Activated naive CD4-positive, alpha-beta T cell treated with anti-CD3 and anti-CD28 coated beads for 36 hours (primary cell): ENCODE measurements at regions of chr1 and their contacts with region 1.

Region 1: DNA sequence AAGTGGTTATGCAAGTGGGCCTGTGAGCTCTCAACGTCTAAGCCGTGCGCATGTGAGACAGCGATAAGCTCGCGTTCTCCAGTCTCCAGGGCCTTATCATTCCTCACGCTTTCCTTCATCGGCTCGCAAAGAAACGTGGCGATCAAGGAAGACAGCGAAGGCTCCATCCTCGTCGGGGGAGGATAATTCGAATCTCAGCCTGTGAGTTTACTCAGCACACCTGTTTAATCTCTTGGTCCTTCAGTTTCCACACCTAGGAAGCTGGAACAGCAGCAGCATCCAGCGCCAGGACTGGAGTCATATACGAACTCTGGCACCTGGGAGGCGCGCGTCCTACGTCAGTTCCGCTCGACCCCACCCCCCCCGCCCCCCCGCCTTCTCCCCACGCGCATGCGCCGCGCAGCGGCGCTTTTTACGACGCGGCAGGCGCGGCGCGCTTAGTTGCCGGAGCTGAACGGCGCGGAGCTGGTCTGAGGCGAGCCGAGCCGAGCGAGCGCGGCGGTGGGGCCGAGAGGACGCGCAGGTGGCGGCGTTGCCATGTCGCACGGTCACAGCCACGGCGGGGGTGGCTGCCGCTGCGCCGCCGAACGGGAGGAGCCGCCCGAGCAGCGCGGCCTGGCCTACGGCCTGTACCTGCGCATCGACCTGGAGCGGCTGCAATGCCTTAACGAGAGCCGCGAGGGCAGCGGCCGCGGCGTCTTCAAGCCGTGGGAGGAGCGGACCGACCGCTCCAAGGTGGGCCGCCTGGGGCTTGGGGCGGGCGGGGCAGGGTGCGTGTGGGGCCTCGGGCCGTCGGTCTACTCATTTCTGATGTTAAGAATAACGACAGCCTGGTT is at the start of gene PITHD1:
- DNase-seq: peak; percentile 81
- H3K4me3 Mint-ChIP-seq: peak within 1 kb of the TSS; percentile 86
- H3K27ac Mint-ChIP-seq: peak within 1 kb of the TSS; percentile 88
- H3K4me1 Mint-ChIP-seq: peaks cover 50% of the 10 kb centered on the region
- H3K27me3 Mint-ChIP-seq: no peaks in the 10 kb centered on the region
- total RNA-seq, gene PITHD1: 73.8 to 75.1 TPM

Region 2: GRCh38 chr1:23720256-23720995 is 57.8 kb before region 1 on chr1:
- CTCF ChIA-PET with region 1: no interaction called
- intact Hi-C with region 1: no loop called
- DNase-seq: peak; percentile 57
- H3K4me3 Mint-ChIP-seq: no peak overlapping the region
- H3K27ac Mint-ChIP-seq: peak overlapping the region; percentile 67
- H3K4me1 Mint-ChIP-seq: peaks cover 28% of the 10 kb centered on the region
- H3K27me3 Mint-ChIP-seq: no peaks in the 10 kb centered on the region

Region 3: GRCh38 chr1:23790696-23791515 is 12.7 kb after region 1 on chr1 and contains the start of gene LYPLA2:
- CTCF ChIA-PET with region 1: interaction called, 4 read pairs
- intact Hi-C with region 1: loop called (anchors 1 kb)
- DNase-seq: peak; percentile 93
- H3K4me3 Mint-ChIP-seq: peak within 1 kb of the TSS; percentile 88
- H3K27ac Mint-ChIP-seq: peak within 1 kb of the TSS; percentile 89
- H3K4me1 Mint-ChIP-seq: peaks cover 25% of the 10 kb centered on the region
- H3K27me3 Mint-ChIP-seq: no peaks in the 10 kb centered on the region
- total RNA-seq, gene LYPLA2: 48.1 to 49.7 TPM

Region 4: GRCh38 chr1:23825076-23825761 is 47.0 kb after region 1 on chr1 and contains the start of gene HMGCL:
- CTCF ChIA-PET with region 1: no interaction called
- intact Hi-C with region 1: loop called (anchors 2 kb)
- DNase-seq: peak; percentile 92
- H3K4me3 Mint-ChIP-seq: peak within 1 kb of the TSS; percentile 91
- H3K27ac Mint-ChIP-seq: peak within 1 kb of the TSS; percentile 92
- H3K4me1 Mint-ChIP-seq: peaks cover 15% of the 10 kb centered on the region
- H3K27me3 Mint-ChIP-seq: no peaks in the 10 kb centered on the region
- total RNA-seq, gene HMGCL: 31.5 to 34.5 TPM